ENCODE measurements at regions of chr12 and their contacts with region 1.

Region 1: DNA sequence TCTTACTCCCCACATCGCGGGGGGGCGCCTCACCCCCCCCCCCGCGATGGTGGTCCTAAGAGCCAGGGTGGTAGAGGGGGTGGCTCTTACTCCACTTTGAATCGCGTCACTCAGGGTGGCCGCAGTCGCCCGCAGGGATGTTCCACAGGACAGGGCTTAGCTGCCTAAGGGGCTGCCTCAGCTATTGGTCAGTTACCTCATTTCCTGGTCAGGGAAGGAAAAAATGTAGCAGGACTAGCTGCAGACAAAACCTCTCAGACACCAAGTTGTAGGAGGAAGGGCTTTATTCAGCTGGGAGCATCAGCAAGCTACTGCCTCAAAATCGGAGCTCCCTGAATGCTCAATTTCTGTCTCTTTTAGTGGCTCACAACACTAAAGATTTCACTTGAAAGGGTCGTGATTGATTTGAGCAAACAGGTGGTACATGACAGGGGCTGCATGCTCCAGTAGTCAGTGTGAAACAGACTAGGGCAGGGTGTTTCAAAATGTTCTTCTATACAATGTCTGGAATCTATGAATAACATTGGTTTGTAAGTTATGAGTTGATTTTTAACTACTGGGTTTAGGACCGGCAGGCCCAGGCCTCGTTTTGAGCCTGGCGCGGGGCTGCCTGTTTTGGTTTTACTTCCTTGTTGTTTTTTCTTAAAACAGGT is 6.3 kb upstream of the CLEC6A start:
- DNase-seq: no peak
- ATAC-seq: no peak
- H3K4me3 ChIP-seq: no peak overlapping the region
- H3K27ac ChIP-seq: no peak overlapping the region
- H3K4me1 ChIP-seq: peaks cover 0 to 2% of the 10 kb centered on the region in 2 experiments; a peak in 1 of 5 replicates
- H3K27me3 ChIP-seq: no peaks in the 10 kb centered on the region
- CTCF ChIP-seq: no peak
- EP300 ChIP-seq: no peak
- POLR2A ChIP-seq: no peak
- RAD21 ChIP-seq: no peak

Region 2: DNA sequence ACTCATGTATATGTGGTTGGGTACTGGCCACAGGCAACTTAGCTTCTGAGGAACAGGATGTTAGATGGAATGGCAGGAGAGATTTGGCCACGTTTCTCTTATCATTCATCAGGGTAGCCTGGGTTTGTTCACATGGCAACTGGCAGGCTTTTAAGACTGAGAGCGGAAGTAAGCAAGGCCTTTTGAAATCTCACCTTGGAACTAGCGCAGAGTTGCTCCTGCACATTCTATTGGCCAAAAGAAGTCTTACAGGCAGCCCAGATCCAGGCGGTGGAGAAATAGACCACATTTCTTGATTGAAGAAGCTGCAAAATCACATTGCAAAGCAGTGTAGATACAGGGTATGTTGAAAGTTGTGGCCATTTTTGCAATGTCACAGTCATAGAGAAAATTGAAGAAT is 322.3 kb before region 1 on chr12:
- CTCF ChIA-PET with region 1: no interaction called
- POLR2A ChIA-PET with region 1: no interaction called
- in situ Hi-C with region 1: loop called (anchors 10 kb)
- intact Hi-C with region 1: no loop called
- DNase-seq: peak in 1 of 4 experiments; percentile 10
- ATAC-seq: no peak
- H3K4me3 ChIP-seq: no peak overlapping the region
- H3K27ac ChIP-seq: no peak overlapping the region
- H3K4me1 ChIP-seq: no peaks in the 10 kb centered on the region
- H3K27me3 ChIP-seq: no peaks in the 10 kb centered on the region
- CTCF ChIP-seq: no peak
- EP300 ChIP-seq: no peak
- POLR2A ChIP-seq: no peak
- RAD21 ChIP-seq: no peak